ENCODE measurements at regions of chr19 and their contacts with region 1.

Region 1: DNA sequence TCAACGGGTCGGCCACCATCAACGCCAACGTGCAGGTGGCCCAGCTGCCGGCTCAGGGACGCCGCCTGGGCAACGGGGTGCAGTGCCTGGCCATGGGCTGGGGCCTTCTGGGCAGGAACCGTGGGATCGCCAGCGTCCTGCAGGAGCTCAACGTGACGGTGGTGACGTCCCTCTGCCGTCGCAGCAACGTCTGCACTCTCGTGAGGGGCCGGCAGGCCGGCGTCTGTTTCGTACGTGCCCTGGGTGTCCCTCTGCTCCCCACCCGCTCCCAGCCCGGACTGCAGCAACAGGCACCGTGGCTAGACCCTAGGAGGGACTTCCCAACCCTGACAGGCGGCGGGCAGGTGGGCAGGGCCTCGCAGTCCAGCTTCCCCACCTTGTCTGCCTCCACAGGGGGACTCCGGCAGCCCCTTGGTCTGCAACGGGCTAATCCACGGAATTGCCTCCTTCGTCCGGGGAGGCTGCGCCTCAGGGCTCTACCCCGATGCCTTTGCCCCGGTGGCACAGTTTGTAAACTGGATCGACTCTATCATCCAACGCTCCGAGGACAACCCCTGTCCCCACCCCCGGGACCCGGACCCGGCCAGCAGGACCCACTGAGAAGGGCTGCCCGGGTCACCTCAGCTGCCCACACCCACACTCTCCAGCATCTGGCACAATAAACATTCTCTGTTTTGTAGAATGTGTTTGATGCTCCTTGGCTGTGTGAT is 3.6 kb downstream of the ELANE start:
- DNase-seq: no peak
- H3K4me3 ChIP-seq: no peak overlapping the region
- H3K27ac ChIP-seq: no peak overlapping the region
- H3K4me1 ChIP-seq: peaks cover 0 to 21% (median 17%) of the 10 kb centered on the region in 4 experiments
- H3K27me3 ChIP-seq: peaks cover 0 to 46% (median 12%) of the 10 kb centered on the region in 5 experiments

Region 2: GRCh38 chr19:840519-841206 is 15.1 kb before region 1 on chr19 and contains the start of gene PRTN3:
- CTCF ChIA-PET with region 1: interaction called, 11 read pairs
- POLR2A ChIA-PET with region 1: no interaction called
- DNase-seq: no peak
- H3K4me3 ChIP-seq: no peak within 1 kb of the TSS
- H3K27ac ChIP-seq: no peak within 1 kb of the TSS
- H3K4me1 ChIP-seq: peaks cover 0 to 17% (median 12%) of the 10 kb centered on the region in 4 experiments
- H3K27me3 ChIP-seq: peaks cover 0 to 49% (median 4%) of the 10 kb centered on the region in 5 experiments

Measured in common myeloid progenitor, CD34-positive (primary cell).